Motor neuron (in vitro differentiated cells): ENCODE measurements at regions of chr1 and their contacts with region 1.

Region 1: DNA sequence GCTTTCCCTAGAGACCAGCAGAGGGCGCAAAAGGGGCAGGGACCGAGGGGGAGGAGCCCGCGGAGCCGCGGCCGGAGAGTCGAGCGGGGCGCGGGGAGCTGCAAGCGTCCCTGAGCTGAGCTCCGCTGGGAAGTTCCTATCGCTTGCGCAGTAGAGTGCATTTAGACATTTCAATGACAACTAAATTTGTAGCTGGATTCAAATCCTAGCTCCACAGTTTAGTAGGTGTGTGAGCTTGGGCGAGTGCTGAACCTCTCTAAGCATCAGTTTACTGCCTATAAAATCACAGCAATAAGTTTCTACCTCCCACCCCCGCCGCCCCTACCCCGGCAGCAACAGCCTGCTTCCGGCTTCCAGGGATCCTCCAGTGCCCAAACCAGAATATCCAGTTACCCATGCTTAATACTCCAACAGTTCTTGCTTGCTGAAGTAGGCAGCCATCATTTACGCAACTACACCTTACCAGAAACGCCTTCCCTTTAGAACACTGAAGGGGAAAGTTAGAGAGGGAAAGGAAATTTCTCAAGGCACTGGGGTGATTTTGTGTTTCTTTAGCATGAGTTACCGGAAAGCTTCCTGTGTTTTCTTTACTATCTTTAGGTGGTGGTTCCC is 9.1 kb downstream of the TLR5 start:
- ATAC-seq: peak; percentile 39 to 95 (median 91)
- H3K4me3 ChIP-seq: peak overlapping the region in 4 of 5 donors; percentile 5 to 19 (median 10)
- H3K27ac ChIP-seq: no peak overlapping the region
- H3K4me1 ChIP-seq: no peaks in the 10 kb centered on the region

Region 2: GRCh38 chr1:223683586-223684487 is 549.9 kb after region 1 on chr1:
- in situ Hi-C with region 1: loop called in 3 of 9 experiments (anchors 10 kb)
- ATAC-seq: peak; percentile 84 to 99 (median 97)
- H3K4me3 ChIP-seq: no peak overlapping the region
- H3K27ac ChIP-seq: no peak overlapping the region
- H3K4me1 ChIP-seq: no peaks in the 10 kb centered on the region

Region 3: DNA sequence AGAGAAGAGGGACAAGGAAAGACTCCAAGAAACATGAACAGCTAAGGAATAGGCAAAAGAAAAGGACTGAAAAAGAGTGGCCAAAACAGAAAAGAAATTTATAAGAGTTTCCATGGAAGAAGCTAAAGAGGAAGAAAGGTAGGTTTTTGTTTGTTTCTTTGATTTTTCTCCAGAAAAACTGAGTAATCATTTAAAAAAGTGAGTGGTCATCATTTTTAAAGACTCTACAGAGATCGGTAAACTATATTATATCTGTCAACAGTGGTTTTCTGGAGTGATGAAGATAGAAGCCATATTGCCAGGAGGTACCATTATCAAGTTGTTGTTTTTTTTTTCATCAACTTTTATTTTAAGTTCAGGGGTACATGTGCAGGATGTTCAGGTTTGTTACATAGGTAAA is 1997.9 kb after region 1 on chr1:
- in situ Hi-C with region 1: no loop called
- ATAC-seq: no peak
- H3K4me3 ChIP-seq: no peak overlapping the region
- H3K27ac ChIP-seq: no peak overlapping the region
- H3K4me1 ChIP-seq: no peaks in the 10 kb centered on the region